Right cardiac atrium (tissue), 5 donors: ENCODE measurements at regions of chr1 and their contacts with region 1.

Region 1: GRCh38 chr1:115807723-115808122 is 33.2 kb downstream of the NHLH2 start:
- DNase-seq: no peak
- ATAC-seq: peak; percentile 58 to 77
- H3K4me3 ChIP-seq: no peak overlapping the region
- H3K27ac ChIP-seq: no peak overlapping the region
- H3K4me1 ChIP-seq: no peaks in the 10 kb centered on the region
- H3K27me3 ChIP-seq: no peaks in the 10 kb centered on the region

Region 2: GRCh38 chr1:115976062-115976920 is 168.6 kb after region 1 on chr1 and contains the start of gene SLC22A15:
- intact Hi-C with region 1: loop called in 3 of 4 experiments (anchors 5 to 10 kb)
- DNase-seq: peak; percentile 72 to 92 (median 87)
- ATAC-seq: peak; percentile 88 to 89
- H3K4me3 ChIP-seq: peak within 1 kb of the TSS; percentile 94
- H3K27ac ChIP-seq: peak within 1 kb of the TSS; percentile 62
- H3K4me1 ChIP-seq: no peaks in the 10 kb centered on the region
- H3K27me3 ChIP-seq: no peaks in the 10 kb centered on the region
- total RNA-seq, gene SLC22A15: 4.5 to 9.3 (median 5.6) TPM

Region 3: GRCh38 chr1:115980998-115981993 is 173.6 kb after region 1 on chr1:
- intact Hi-C with region 1: loop called in 3 of 4 experiments (anchors 5 to 10 kb)
- DNase-seq: peak in 1 of 3 donors; percentile 59
- ATAC-seq: peak; percentile 37 to 53
- H3K4me3 ChIP-seq: no peak overlapping the region
- H3K27ac ChIP-seq: no peak overlapping the region
- H3K4me1 ChIP-seq: no peaks in the 10 kb centered on the region
- H3K27me3 ChIP-seq: no peaks in the 10 kb centered on the region

Region 4: DNA sequence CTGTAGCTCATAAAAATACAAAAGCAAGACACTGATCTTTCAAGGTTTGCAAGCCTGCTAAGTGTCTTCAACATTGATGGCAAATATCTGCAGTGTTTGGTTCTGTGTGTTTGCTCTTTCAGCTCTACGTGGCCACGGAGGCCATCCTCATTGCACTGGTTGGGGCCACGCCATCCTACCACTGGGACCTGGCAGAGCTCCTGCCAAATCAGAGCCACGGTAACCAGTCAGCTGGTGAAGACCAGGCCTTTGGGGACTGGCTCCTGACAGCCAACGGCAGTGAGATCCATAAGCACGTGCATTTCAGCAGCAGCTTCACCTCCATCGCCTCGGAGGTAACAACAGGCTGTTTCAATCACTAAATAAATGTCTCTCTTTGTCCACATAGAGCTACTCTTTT is 184.2 kb after region 1 on chr1:
- intact Hi-C with region 1: loop called in 2 of 4 experiments (anchors 10 kb)
- DNase-seq: no peak
- ATAC-seq: no peak
- H3K4me3 ChIP-seq: no peak overlapping the region
- H3K27ac ChIP-seq: no peak overlapping the region
- H3K4me1 ChIP-seq: no peaks in the 10 kb centered on the region
- H3K27me3 ChIP-seq: no peaks in the 10 kb centered on the region

Region 5: DNA sequence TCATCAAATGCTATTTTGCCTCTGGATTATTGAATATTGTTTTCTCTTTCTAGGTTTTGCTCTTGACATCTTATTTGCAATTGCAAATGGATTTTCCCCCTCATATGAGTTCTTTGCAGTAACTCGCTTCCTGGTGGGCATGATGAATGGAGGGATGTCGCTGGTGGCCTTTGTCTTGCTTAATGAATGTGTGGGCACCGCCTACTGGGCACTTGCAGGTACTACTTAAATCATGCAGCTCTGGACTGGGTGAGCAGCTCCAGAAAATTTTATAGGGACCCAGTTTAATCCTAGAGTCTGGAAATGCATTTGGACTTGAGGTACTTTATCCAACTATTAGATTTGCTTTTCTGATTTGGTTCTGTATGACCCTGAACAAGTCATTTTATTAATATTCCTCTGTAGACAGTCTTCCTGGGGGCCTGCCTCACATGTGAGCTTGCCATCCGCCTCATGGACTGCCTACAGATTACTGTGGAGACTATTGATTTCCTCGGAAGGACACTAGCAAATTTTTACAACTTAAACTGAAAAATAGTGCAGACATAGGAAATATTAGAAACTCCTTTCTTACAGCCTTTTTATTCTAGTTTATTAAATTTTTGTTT is 213.0 kb after region 1 on chr1:
- intact Hi-C with region 1: loop called in 2 of 4 experiments (anchors 10 kb)
- DNase-seq: peak; percentile 35 to 68 (median 67)
- ATAC-seq: peak in 1 of 2 donors; percentile 70
- H3K4me3 ChIP-seq: no peak overlapping the region
- H3K27ac ChIP-seq: no peak overlapping the region
- H3K4me1 ChIP-seq: peaks cover 2% of the 10 kb centered on the region
- H3K27me3 ChIP-seq: no peaks in the 10 kb centered on the region